MCF 10A (cell line): ENCODE measurements at regions of chr6 and their contacts with region 1.

Region 1: GRCh38 chr6:70107852-70108629 is 194.8 kb downstream of the COL9A1 start:
- DNase-seq: peak; percentile 33
- H3K4me3 Mint-ChIP-seq: no peak overlapping the region
- H3K27ac Mint-ChIP-seq: no peak overlapping the region
- H3K4me1 Mint-ChIP-seq: no peaks in the 10 kb centered on the region
- H3K27me3 Mint-ChIP-seq: peaks cover 96% of the 10 kb centered on the region
- CTCF ChIP-seq: peak; percentile 64

Region 2: DNA sequence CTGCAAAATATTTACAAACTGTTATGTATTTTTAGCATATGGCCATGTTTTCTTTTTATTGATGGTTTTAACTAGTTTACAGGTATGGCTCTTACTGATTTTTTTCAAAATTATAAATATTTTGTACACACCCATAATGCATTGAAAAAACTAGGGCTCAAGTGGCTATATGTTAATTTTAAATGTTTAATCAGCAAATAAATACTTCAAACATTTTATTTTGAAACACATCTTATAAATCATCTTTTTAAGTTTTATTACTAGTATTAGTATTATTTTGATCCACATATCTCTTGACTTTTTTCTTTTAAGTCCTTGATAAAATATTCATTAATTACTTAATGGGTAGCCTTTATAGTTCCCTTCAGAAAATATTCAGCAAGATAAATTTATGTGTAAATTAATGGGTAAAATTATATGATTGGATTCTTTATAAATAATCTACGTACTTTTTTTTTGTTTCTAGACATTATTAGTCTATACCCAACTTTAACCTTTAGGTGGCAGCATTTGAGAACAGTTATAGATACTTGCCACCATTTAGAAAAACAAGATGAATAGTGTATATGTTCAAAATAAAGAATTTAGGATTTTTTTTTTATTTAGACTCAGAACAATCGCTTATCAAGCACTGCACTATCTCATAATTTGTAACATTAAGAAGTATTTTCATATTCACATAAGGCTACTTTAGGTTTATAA is 1231.1 kb before region 1 on chr6:
- CTCF ChIA-PET with region 1: interaction called, 5 read pairs
- POLR2A ChIA-PET with region 1: no interaction called
- intact Hi-C with region 1: loop called (anchors 5 kb)
- DNase-seq: peak; percentile 22
- H3K4me3 Mint-ChIP-seq: no peak overlapping the region
- H3K27ac Mint-ChIP-seq: no peak overlapping the region
- H3K4me1 Mint-ChIP-seq: no peaks in the 10 kb centered on the region
- H3K27me3 Mint-ChIP-seq: peaks cover 69% of the 10 kb centered on the region
- CTCF ChIP-seq: peak; percentile 36

Region 3: GRCh38 chr6:69732640-69733039 is 375.4 kb before region 1 on chr6:
- CTCF ChIA-PET with region 1: interaction called, 6 read pairs
- POLR2A ChIA-PET with region 1: no interaction called
- intact Hi-C with region 1: loop called (anchors 5 kb)
- DNase-seq: peak; percentile 4
- H3K4me3 Mint-ChIP-seq: no peak overlapping the region
- H3K27ac Mint-ChIP-seq: no peak overlapping the region
- H3K4me1 Mint-ChIP-seq: no peaks in the 10 kb centered on the region
- H3K27me3 Mint-ChIP-seq: no peaks in the 10 kb centered on the region
- CTCF ChIP-seq: peak; percentile 14

Region 4: DNA sequence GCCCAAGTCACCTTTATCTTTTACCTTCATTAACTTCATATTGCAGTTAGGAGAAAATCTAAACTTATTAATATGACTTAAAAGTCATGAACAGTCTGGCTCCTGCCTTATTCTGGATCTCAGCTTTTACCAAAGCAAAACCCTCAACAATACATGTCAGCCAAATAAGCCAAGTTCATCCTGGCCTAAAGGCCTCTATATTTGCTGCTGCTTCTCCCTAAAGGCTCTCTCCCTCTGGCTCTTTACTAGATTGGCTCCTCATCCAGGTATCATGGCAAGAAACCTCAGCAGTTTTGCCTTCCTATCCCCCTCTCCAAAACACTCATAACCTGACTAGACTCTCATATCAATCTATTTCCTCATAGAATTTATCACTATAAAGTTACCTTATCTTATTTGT is 322.3 kb before region 1 on chr6:
- CTCF ChIA-PET with region 1: no interaction called
- POLR2A ChIA-PET with region 1: no interaction called
- intact Hi-C with region 1: no loop called
- DNase-seq: no peak
- H3K4me3 Mint-ChIP-seq: no peak overlapping the region
- H3K27ac Mint-ChIP-seq: no peak overlapping the region
- H3K4me1 Mint-ChIP-seq: peaks cover 3% of the 10 kb centered on the region
- H3K27me3 Mint-ChIP-seq: no peaks in the 10 kb centered on the region
- CTCF ChIP-seq: no peak

Region 5: DNA sequence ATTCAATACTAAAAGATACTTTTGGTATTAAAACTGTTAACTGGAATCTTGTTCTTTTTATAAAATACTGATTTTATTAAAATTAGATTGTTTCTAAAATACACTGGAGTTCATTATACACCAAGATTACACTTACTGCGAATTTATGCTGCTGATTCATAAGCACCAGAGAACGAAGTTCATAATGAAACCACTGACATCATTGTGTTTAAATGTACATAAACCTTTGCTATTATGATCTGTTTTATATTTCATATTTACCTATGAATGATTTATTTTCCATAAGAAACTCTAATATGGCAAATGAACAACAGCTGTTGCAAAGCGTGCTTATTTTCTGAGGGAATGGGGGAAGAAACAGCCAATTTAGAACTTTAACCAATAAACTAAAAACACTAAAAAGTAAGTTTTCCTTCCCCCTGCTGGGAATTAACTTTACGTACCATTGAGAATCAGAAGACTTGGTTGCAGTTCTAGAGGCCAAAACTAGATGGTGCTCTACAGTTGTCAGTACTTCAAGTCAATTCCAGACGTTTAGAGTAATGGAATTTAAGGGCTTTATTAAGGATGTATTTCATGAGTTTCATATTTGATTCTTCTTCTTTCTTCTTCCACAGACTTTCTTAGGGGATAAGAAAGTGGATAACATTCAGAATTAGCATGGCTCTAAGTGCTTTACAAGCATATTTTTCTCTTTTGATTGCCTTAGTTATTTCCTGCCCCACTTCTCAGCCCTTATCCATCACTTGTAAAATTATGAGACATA is 272.4 kb before region 1 on chr6:
- CTCF ChIA-PET with region 1: interaction called, 19 read pairs
- POLR2A ChIA-PET with region 1: no interaction called
- intact Hi-C with region 1: loop called (anchors 1 kb)
- DNase-seq: peak; percentile 60
- H3K4me3 Mint-ChIP-seq: no peak overlapping the region
- H3K27ac Mint-ChIP-seq: no peak overlapping the region
- H3K4me1 Mint-ChIP-seq: no peaks in the 10 kb centered on the region
- H3K27me3 Mint-ChIP-seq: peaks cover 94% of the 10 kb centered on the region
- CTCF ChIP-seq: peak; percentile 64